ENCODE measurements at regions of chr13 and their contacts with region 1.

Region 1: GRCh38 chr13:51663973-51664957 is 80.0 kb downstream of the WDFY2 start:
- DNase-seq: no peak
- ATAC-seq: peak; percentile 15; the same call in 1 of the 2 replicates
- H3K4me3 ChIP-seq: no peak overlapping the region
- H3K27ac ChIP-seq: no peak overlapping the region
- H3K4me1 ChIP-seq: peaks cover 14% of the 10 kb centered on the region
- H3K27me3 ChIP-seq: no peaks in the 10 kb centered on the region
- CTCF ChIP-seq: no peak
- POLR2A ChIP-seq: no peak
- RAD21 ChIP-seq: no peak

Region 2: DNA sequence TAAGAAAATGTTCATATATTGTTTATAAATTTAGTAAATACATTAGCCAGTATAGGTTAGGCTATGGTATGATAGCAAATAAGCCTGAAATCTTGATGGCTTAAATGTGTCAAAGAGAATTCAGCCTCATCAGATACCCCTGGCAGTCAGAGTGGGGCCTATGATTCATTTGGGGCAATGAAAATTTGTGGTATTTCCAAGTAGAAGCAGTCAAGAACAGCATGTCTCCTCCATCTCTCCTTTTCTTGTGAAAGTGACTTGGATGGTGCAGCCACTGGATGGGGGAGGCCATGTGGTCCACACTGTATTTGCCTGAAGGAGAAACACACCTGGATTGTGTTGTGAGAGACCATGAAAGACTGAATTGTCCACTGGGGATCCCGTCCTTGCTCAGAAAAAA is 903.5 kb before region 1 on chr13:
- CTCF ChIA-PET with region 1: no interaction called
- POLR2A ChIA-PET with region 1: no interaction called
- dilution Hi-C with region 1: no loop called
- in situ Hi-C with region 1: no loop called
- intact Hi-C with region 1: no loop called
- DNase-seq: no peak
- ATAC-seq: no peak
- H3K4me3 ChIP-seq: no peak overlapping the region
- H3K27ac ChIP-seq: no peak overlapping the region
- H3K4me1 ChIP-seq: no peaks in the 10 kb centered on the region
- H3K27me3 ChIP-seq: peaks cover 20% of the 10 kb centered on the region
- CTCF ChIP-seq: no peak
- POLR2A ChIP-seq: no peak
- RAD21 ChIP-seq: no peak

Region 3: GRCh38 chr13:50826035-50826434 is 838.2 kb before region 1 on chr13:
- CTCF ChIA-PET with region 1: no interaction called
- POLR2A ChIA-PET with region 1: no interaction called
- dilution Hi-C with region 1: no loop called
- in situ Hi-C with region 1: no loop called
- intact Hi-C with region 1: no loop called
- DNase-seq: no peak
- ATAC-seq: no peak
- H3K4me3 ChIP-seq: no peak overlapping the region
- H3K27ac ChIP-seq: no peak overlapping the region
- H3K4me1 ChIP-seq: no peaks in the 10 kb centered on the region
- H3K27me3 ChIP-seq: peaks cover 9% of the 10 kb centered on the region
- CTCF ChIP-seq: no peak
- POLR2A ChIP-seq: no peak
- RAD21 ChIP-seq: no peak

Region 4: GRCh38 chr13:50969691-50970090 is 694.6 kb before region 1 on chr13:
- CTCF ChIA-PET with region 1: no interaction called
- POLR2A ChIA-PET with region 1: no interaction called
- dilution Hi-C with region 1: no loop called
- in situ Hi-C with region 1: no loop called
- intact Hi-C with region 1: no loop called
- DNase-seq: no peak
- ATAC-seq: no peak
- H3K4me3 ChIP-seq: no peak overlapping the region
- H3K27ac ChIP-seq: no peak overlapping the region
- H3K4me1 ChIP-seq: no peaks in the 10 kb centered on the region
- H3K27me3 ChIP-seq: no peaks in the 10 kb centered on the region
- CTCF ChIP-seq: no peak
- POLR2A ChIP-seq: no peak
- RAD21 ChIP-seq: no peak

Region 5: GRCh38 chr13:51479199-51479523 is 185.1 kb before region 1 on chr13:
- CTCF ChIA-PET with region 1: interaction called, 13 read pairs
- POLR2A ChIA-PET with region 1: no interaction called
- dilution Hi-C with region 1: no loop called
- in situ Hi-C with region 1: no loop called
- intact Hi-C with region 1: no loop called
- DNase-seq: peak; percentile 71
- ATAC-seq: peak; percentile 75
- H3K4me3 ChIP-seq: no peak overlapping the region
- H3K27ac ChIP-seq: no peak overlapping the region
- H3K4me1 ChIP-seq: peaks cover 10% of the 10 kb centered on the region
- H3K27me3 ChIP-seq: no peaks in the 10 kb centered on the region
- CTCF ChIP-seq: no peak
- POLR2A ChIP-seq: no peak
- RAD21 ChIP-seq: no peak

Region 6: DNA sequence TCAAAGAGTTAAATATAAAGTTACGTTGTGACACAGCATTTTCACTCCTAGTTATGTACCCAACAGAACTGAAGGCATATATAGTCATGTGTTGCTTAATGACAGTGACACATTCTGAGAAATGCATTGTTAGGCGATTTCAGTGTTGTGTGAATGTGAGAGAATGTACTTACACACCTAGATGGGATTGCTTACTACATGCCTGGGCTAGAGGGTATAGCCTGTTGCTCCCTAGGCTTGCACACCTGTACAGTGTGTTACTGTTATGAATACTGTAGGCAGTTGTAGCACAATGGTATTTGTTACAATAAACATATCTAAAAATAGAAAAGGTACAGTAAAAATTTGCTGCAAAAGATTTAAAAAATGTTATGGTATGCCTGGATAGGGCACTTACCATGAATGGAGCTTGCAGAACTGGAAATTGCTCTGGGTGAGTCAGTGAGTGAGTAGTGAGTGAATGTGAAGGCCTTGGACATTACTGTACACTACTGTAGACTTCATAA is 50.5 kb after region 1 on chr13:
- CTCF ChIA-PET with region 1: no interaction called
- POLR2A ChIA-PET with region 1: no interaction called
- dilution Hi-C with region 1: no loop called
- in situ Hi-C with region 1: no loop called
- intact Hi-C with region 1: no loop called
- DNase-seq: peak; percentile 89
- ATAC-seq: peak; percentile 93
- H3K4me3 ChIP-seq: no peak overlapping the region
- H3K27ac ChIP-seq: no peak overlapping the region; the same call in 1 of the 2 replicates
- H3K4me1 ChIP-seq: peaks cover 4% of the 10 kb centered on the region
- H3K27me3 ChIP-seq: no peaks in the 10 kb centered on the region
- CTCF ChIP-seq: no peak
- POLR2A ChIP-seq: no peak
- RAD21 ChIP-seq: no peak; the same call in 1 of the 2 replicates

Measured in IMR-90 (cell line).